Ovary (tissue), 10 donors: ENCODE measurements at regions of chr4 and their contacts with region 1.

Region 1: GRCh38 chr4:153153339-153153871 is 50.8 kb upstream of the TRIM2 start:
- DNase-seq: peak; percentile 15 to 55 (median 36)
- H3K4me3 ChIP-seq: peak overlapping the region; percentile 46
- H3K27ac ChIP-seq: no peak overlapping the region
- H3K4me1 ChIP-seq: peaks cover 1% of the 10 kb centered on the region
- H3K27me3 ChIP-seq: no peaks in the 10 kb centered on the region
- CTCF ChIP-seq: no peak
- EP300 ChIP-seq: no peak
- POLR2A ChIP-seq: no peak

Region 2: DNA sequence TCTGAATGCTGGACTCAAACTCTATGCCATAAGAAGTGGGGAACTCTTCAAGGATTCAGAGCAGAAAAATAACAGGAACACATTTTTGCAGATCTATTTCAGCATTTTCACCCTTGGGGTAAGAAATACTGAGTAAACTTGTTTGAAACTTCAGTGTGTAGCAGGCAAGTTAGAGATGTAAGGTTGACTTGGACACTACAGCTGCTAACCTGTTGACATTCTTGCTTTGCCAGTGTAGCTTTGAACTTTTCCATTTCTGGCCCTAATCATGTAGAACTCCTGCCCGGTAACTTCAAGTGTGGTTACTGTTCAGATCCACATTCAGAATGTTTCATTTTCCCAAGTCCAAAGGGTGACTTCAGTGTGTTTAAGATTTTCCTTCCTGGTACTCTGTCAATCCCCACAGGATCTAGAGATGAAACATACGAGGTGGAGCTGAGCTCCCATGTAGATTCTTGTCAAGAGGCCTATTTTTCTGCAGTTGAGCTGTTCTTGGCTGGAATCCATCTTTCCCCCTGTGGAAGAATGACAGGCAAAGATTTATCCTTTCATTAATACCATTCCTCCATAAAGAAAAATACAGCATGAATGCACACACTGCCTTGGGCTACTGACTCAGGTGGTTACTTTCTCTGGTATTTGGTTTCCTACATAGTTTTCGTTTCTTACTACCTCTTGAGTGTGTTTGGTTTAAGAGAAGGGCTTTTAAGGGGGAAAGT is 183.1 kb before region 1 on chr4:
- intact Hi-C with region 1: no loop called
- DNase-seq: no peak
- H3K4me3 ChIP-seq: no peak overlapping the region
- H3K27ac ChIP-seq: no peak overlapping the region
- H3K4me1 ChIP-seq: no peaks in the 10 kb centered on the region
- H3K27me3 ChIP-seq: no peaks in the 10 kb centered on the region
- CTCF ChIP-seq: no peak
- EP300 ChIP-seq: no peak
- POLR2A ChIP-seq: no peak

Region 3: DNA sequence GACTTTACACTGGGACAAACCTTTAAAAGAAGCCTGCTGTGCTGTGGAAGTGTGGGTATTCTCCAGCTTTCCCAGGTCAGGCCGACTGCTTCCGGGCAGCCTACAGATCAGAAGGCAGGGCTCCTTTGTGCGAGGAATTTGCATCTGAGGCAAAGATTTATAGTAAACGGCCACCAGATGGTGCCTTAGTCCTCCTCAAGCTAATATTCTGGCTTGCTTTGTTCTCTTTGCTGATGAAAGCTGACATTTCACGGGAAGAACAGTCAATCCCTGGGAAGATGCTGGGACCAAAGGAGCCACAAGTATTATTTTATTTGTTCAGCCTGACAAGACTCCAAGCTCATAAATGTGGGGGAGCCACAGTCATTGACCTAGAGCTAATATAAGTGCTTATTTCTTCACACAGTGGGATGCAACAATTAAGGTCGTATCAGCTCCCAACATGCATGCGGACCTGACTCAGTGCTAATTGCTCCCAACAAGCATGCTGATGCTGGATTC is 69.9 kb before region 1 on chr4:
- intact Hi-C with region 1: no loop called
- DNase-seq: peak in 4 of 5 donors; percentile 23 to 40 (median 36)
- H3K4me3 ChIP-seq: no peak overlapping the region
- H3K27ac ChIP-seq: no peak overlapping the region
- H3K4me1 ChIP-seq: no peaks in the 10 kb centered on the region
- H3K27me3 ChIP-seq: no peaks in the 10 kb centered on the region
- CTCF ChIP-seq: peak in 2 of 3 donors; percentile 30
- EP300 ChIP-seq: no peak
- POLR2A ChIP-seq: no peak

Region 4: GRCh38 chr4:153221783-153222706 is 68.6 kb after region 1 on chr4:
- intact Hi-C with region 1: loop called in 1 of 4 experiments (anchors 10 kb)
- DNase-seq: peak; percentile 60 to 77 (median 68)
- H3K4me3 ChIP-seq: peak overlapping the region; percentile 50
- H3K27ac ChIP-seq: peak overlapping the region; percentile 89 to 94
- H3K4me1 ChIP-seq: peaks cover 8% of the 10 kb centered on the region
- H3K27me3 ChIP-seq: no peaks in the 10 kb centered on the region
- CTCF ChIP-seq: no peak
- EP300 ChIP-seq: no peak
- POLR2A ChIP-seq: peak; percentile 40

Region 5: GRCh38 chr4:153318696-153319320 is 165.4 kb after region 1 on chr4:
- intact Hi-C with region 1: loop called in 1 of 4 experiments (anchors 5 kb)
- DNase-seq: peak in 2 of 5 donors; percentile 37 to 47
- H3K4me3 ChIP-seq: no peak overlapping the region
- H3K27ac ChIP-seq: no peak overlapping the region
- H3K4me1 ChIP-seq: no peaks in the 10 kb centered on the region
- H3K27me3 ChIP-seq: no peaks in the 10 kb centered on the region
- CTCF ChIP-seq: peak; percentile 33 to 62 (median 55)
- EP300 ChIP-seq: no peak
- POLR2A ChIP-seq: no peak